ENCODE measurements at regions of chr2 and their contacts with region 1.

Region 1: DNA sequence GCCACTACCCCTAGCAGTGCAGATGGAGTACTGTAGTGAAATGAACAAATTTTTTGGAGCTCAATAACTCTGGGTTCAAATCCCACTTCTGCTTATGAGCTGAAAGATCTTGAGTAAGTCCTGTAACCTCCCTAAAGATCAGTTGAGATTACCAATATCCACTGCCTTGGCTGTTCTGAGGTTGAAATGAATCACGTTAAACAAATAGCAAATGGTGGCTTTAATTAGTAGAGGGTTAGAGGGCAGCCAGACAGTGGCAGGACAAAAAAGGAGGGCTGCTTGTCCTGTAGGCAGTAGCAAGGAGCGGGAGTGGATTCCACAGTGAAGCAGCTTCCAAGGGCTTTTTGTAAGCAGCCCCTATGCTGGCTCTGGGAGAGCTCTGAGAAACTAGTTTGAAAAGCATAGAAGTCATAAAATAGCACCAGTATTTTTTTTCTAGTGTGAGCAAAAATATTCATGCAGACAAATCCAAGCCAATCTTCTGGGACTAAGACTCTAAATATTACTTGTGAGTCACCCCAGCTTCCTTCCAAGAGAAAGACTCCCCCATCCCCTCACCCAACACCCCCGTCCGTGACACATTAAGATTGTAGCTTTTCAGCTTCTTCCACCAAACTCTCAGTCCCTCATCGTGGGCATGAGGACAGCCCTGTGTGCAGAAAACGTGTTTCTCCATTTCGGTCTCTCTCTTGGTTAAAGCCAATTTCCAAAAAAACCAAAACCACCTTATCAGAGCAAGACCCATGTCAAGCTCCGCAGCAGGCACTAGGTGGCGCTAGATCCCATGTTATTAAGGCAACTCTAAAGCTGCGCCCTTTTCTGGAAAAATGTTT is 123.5 kb upstream of the LGALSL start:
- DNase-seq: peak; percentile 54
- H3K4me3 Mint-ChIP-seq: no peak overlapping the region
- H3K27ac Mint-ChIP-seq: peak overlapping the region; percentile 64
- H3K4me1 Mint-ChIP-seq: peaks cover 49% of the 10 kb centered on the region
- H3K27me3 Mint-ChIP-seq: peaks cover 7% of the 10 kb centered on the region

Region 2: DNA sequence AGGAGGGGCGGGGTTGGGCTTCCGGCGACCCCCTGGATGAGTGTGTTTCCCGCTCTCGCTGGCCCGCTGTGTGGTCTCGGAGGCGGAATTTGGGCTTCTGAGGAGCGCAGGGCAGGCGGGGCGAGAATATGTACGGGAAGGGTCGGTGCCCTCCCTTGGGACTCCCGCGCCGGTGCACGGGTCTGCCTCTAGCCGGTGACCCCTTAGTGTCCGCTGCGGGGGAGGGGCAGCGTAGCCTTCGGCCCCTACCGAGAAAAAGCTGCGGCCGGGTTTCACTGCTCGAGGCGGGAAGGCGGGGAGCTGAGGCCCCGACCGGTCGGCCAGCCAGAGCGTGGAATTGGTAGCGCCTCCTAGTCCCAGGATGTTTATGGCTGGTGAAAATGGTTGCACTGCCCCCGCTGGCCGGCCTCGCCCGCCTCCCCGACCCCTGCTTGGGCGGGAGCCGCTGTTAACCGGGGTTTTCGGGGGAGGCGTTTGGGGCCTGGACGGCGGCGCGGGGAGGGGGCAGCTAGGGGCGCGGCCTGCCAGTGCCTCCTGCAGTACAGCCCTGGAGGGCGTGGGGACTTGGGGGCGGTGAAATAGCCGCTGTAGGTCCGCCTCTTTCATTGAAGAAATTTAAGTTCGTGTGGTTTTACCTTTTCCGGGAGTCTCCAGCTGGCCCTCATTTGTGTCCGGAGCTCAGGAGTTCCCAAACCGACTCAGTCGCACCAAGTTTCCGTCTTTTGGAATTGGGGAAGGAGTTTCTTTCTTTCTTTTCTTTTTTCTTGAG is 489.1 kb before region 1 on chr2 and contains the start of gene UGP2:
- intact Hi-C with region 1: loop called (anchors 5 kb)
- DNase-seq: peak; percentile 88
- H3K4me3 Mint-ChIP-seq: peak within 1 kb of the TSS; percentile 92
- H3K27ac Mint-ChIP-seq: peak within 1 kb of the TSS; percentile 95
- H3K4me1 Mint-ChIP-seq: peaks cover 48% of the 10 kb centered on the region
- H3K27me3 Mint-ChIP-seq: peaks cover 2% of the 10 kb centered on the region
- total RNA-seq, gene UGP2: 90.8 and 91.2 TPM in 2 replicates

Region 3: DNA sequence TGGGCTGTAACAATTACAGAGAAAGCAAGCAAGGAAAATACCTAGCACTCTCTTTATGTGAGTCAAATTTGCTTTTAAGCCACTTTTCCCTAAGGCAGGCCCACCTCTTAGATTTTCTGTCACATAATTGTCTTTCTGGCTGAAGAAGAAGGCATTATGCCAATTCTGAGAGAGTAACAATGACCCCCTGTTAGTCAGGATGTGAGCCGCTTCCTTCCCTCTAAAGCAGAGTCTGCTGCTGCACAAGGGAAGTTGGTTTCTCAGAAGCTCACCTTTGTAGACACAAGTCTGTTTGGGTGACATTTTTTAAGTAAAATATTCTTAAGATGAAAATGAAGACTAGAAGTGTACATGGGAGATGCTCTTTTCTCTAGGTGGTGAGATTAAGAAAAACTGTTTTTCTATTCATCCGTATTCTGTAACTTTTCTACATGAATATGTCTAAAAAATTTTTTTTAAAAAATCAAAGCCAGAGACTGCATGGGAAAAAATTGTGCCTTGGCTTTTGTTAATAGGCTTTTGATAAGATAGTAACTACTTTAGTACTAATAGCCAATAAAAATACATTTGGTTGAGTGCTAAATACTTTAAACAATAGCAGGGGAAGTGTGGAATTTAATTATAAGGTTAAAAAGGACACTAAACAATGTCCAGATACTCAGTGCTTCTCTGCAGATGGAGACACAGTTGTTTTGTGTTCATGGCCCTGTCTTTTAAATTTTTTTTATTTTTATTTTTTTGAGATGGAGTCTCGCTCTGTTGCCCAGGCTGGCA is 277.8 kb before region 1 on chr2:
- intact Hi-C with region 1: loop called (anchors 1 kb)
- DNase-seq: no peak
- H3K4me3 Mint-ChIP-seq: no peak overlapping the region
- H3K27ac Mint-ChIP-seq: no peak overlapping the region
- H3K4me1 Mint-ChIP-seq: peaks cover 34% of the 10 kb centered on the region
- H3K27me3 Mint-ChIP-seq: peaks cover 5% of the 10 kb centered on the region

Region 4: DNA sequence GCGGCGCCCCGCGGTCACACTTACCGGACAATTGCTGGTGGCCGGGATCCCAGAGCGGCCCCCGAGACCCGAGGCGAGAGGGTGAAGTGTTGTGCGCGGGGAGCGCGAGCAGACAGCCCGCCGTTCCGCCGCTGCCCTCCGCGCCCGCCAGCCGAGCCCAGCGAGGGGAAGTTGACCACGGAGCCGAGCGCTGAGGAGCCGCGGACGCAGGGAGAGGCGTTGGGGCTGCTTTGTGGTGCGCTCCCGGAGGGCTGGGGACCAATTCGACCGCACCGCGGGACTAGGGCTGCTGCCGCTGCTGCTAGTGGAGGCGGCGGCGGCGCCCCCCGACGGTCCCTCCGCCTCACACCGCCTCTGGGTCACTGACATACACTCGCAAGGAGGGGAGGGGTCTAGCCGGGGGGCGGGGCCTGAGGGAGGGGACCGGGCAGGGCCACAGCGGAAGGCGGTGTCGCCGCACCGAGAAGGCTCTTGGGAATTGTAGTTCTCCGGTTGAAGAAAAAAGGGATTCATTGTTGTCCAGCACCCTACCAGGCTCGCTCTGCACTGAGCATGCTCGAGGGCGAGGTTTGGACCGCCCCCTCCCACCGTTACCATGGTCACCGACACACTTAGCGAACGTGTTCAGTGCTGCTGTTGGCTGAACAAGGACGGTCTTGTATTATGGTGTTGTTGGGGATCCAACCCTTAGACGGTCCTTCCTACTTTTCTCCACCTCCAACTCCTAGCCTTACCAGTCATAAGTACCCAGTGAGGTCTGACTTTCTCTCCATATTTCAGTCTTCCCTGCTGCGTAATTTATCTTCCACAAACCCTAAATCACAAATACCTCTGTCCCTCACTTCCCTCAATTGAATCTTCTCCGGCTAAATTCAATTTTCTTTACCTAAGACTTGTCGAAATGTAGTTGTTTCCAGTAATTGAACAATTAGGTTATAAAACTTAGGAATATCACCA is 186.2 kb before region 1 on chr2 and contains the start of gene PELI1:
- intact Hi-C with region 1: loop called (anchors 2 kb)
- DNase-seq: peak; percentile 89
- H3K4me3 Mint-ChIP-seq: peak within 1 kb of the TSS; percentile 89
- H3K27ac Mint-ChIP-seq: peak within 1 kb of the TSS; percentile 91
- H3K4me1 Mint-ChIP-seq: peaks cover 23% of the 10 kb centered on the region
- H3K27me3 Mint-ChIP-seq: no peaks in the 10 kb centered on the region
- total RNA-seq, gene PELI1: 21.6 and 25.1 TPM in 2 replicates

Region 5: DNA sequence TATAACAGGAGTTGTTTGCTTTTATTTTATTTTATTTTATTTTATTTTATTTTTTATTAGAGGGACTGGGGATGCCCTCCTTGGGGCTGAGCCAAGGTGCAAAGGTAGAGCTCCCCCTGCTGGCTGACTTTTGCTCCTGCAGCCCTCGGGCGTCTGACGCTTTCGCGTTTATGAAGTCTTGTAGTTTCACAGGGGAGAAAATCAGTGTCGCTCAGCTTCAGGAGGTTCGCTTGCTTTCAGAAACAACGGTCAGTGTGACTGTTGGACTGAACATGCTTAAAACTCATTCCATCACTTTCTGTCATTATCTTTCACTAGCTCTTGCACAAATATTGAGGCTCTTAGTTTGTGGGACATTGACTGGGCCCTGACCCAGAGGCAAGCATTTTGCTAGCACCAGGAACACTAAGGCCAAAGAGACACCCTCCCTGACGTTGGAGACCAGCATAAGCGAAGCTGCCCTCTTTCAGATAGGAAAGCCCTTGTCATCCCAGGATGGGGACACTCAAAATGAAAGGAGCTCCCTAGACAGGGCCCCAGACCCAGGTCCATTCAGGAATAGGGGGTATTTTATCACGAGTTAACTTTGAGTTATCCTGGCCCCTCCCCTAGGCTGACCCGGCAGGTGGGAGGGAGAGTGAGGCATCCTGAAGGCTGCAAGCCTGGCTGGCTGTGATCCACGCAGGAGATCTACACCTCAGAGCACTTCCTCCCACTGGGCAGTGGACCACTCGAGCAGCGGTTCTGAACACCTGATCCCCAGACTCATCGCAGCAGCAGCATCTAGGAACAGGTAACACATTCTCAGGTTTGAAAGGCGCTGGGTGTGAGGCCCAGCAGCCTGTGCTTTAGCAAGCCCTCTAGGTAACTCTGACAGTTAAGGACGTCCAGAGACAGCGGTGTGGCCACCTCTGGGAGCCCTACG is 157.8 kb after region 1 on chr2:
- intact Hi-C with region 1: loop called (anchors 1 kb)
- DNase-seq: peak; percentile 55
- H3K4me3 Mint-ChIP-seq: no peak overlapping the region
- H3K27ac Mint-ChIP-seq: no peak overlapping the region
- H3K4me1 Mint-ChIP-seq: peaks cover 15% of the 10 kb centered on the region
- H3K27me3 Mint-ChIP-seq: peaks cover 39% of the 10 kb centered on the region

Region 6: GRCh38 chr2:64679673-64680425 is 349.4 kb after region 1 on chr2:
- intact Hi-C with region 1: loop called (anchors 1 kb)
- DNase-seq: no peak
- H3K4me3 Mint-ChIP-seq: peak overlapping the region; percentile 61
- H3K27ac Mint-ChIP-seq: peak overlapping the region; percentile 93
- H3K4me1 Mint-ChIP-seq: peaks cover 59% of the 10 kb centered on the region
- H3K27me3 Mint-ChIP-seq: no peaks in the 10 kb centered on the region

Region 7: DNA sequence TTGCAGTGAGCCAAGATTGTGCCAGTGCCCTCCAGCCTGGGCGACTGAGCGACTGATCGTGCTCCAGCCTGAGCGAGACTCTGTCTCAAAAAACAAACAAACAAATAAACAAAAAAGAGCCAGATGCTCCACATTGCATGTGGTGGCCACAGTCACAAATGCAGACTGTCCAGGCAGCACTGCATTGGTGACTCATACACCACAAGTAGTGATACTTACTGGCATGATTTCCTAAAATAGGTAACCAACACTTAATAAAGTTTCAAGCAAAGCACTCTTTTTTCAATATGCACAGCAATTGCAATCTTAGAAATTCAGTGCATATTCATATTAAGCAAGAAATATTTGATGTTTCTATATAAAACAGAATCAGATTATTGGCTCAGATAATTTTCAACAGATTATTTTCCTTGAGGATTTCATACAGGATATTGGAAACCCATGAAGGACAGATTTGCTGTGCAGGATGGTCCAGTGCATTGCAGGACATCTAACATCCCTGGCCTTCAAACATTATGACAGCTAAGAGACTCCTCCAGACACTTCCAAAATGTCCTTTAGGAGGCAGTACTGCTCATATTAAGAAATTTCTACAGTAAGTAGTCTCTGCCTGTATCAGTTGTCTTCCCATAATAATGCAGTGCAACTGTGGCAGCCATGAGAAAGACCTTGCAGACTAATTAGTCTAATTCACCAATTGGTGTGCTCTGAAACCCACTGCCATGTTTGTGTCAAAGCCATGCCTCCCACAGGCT is 648.2 kb after region 1 on chr2:
- intact Hi-C with region 1: loop called (anchors 1 kb)
- DNase-seq: no peak
- H3K4me3 Mint-ChIP-seq: no peak overlapping the region
- H3K27ac Mint-ChIP-seq: no peak overlapping the region
- H3K4me1 Mint-ChIP-seq: peaks cover 49% of the 10 kb centered on the region
- H3K27me3 Mint-ChIP-seq: peaks cover 10% of the 10 kb centered on the region

Measured in activated T-helper 2 cell treated with anti-CD3 and anti-CD28 coated beads, Interferon-gamma antibody, Interleukin-2, Interleukin-4, amounts not matched to agents 10 μg/mL and 5 μg/mL and 100 μg/mL, durations not matched to agents 14 hours and 24 hours and 36 hours (primary cell).